RWPE1 (cell line): ENCODE measurements at regions of chr20 and their contacts with region 1.

Region 1: GRCh38 chr20:21339499-21339898 is 36.4 kb downstream of the XRN2 start:
- DNase-seq: no peak
- H3K27ac ChIP-seq: no peak overlapping the region
- CTCF ChIP-seq: no peak

Region 2: GRCh38 chr20:21353236-21353635 is 13.7 kb after region 1 on chr20:
- CTCF ChIA-PET with region 1: interaction called, 10 read pairs
- POLR2A ChIA-PET with region 1: no interaction called
- DNase-seq: peak; percentile 8
- H3K27ac ChIP-seq: no peak overlapping the region
- CTCF ChIP-seq: no peak

Region 3: DNA sequence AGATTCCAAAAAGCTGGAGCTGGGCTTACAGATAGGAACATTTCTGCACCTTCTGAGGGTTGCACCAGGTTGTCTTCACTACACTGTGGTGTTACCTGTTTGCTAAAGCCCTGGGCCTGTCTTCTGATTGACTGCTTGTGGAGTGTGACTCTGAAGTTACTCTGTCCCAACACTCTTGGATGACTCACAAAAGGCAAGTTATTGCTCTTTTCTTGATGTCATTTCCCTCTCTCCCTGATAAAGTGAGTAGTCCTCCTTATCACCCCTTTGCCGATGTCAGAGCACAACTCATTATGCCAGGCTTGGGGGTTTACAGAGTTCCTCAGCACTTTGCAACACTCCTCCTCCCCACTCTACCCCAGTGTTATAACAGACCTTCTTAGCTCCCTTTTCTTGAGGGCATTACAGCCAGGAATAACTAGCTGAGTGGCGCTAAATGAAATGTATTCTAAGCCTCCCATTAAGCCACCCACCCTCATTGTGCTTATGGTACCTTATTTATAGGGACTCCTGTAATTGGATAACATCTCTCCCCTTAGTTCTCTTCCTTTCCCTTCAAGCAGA is 93.9 kb after region 1 on chr20:
- CTCF ChIA-PET with region 1: no interaction called
- POLR2A ChIA-PET with region 1: no interaction called
- DNase-seq: no peak
- H3K27ac ChIP-seq: no peak overlapping the region
- CTCF ChIP-seq: no peak